H1 (cell line): ENCODE measurements at regions of chr6 and their contacts with region 1.

Region 1: GRCh38 chr6:108541838-108542759 is 18.6 kb upstream of the FOXO3 start:
- DNase-seq: peak; percentile 59 to 72
- H3K4me3 ChIP-seq: peak overlapping the region in 1 of 4 experiments; percentile 26; a peak in 1 of 8 replicates
- H3K27ac ChIP-seq: no peak overlapping the region
- H3K4me1 ChIP-seq: peaks cover 0 to 9% (median 1%) of the 10 kb centered on the region in 4 experiments; a peak in 3 of 7 replicates
- H3K27me3 ChIP-seq: no peaks in the 10 kb centered on the region
- CTCF ChIP-seq: peak; percentile 45 to 91 (median 90)
- EP300 ChIP-seq: no peak
- POLR2A ChIP-seq: no peak
- RAD21 ChIP-seq: peak; percentile 99

Region 2: GRCh38 chr6:108464418-108465093 is 77.5 kb before region 1 on chr6:
- CTCF ChIA-PET with region 1: no interaction called
- POLR2A ChIA-PET with region 1: no interaction called
- DNase-seq: no peak
- H3K4me3 ChIP-seq: no peak overlapping the region
- H3K27ac ChIP-seq: no peak overlapping the region
- H3K4me1 ChIP-seq: 0 out of 7 replicates have a peak, but pooled peaks cover 0 to 3% (median 0%) of the 10 kb centered on the region in 4 experiments
- H3K27me3 ChIP-seq: no peaks in the 10 kb centered on the region
- CTCF ChIP-seq: no peak
- EP300 ChIP-seq: no peak
- POLR2A ChIP-seq: no peak
- RAD21 ChIP-seq: no peak

Region 3: DNA sequence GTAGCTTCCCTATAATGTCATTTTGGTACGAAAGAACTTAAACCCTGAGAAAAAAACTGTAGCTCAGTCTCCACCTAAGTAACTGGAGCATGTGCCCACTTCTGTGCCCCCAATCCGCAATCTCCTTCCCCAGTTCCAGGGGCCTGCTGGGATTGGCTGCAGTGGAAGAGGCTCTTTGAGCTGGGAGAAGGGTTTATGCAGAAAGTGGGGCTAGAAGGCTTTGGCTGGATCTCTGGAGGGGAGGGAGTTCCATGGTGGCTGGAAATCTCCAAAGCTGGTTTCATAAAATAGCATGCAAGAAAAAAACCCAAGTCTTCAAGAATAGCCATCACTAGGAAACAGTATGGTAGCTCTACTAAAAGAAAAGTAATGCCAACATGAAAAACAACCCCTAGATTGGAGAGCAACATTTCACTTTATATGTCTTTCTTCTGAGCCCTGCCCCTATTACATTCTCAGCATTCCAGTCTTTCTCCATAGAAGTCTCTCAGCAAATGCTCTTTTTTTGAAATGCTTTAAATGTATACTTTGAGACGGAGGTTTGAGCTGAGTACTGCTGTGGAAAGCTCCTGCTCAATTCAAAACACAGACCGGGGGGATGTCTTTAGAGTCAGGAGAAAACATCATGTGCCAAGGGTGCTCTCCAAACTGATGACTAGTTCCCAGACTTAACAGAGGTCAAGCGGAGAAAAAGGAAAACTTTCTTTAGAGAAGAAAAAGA is 17.4 kb before region 1 on chr6:
- CTCF ChIA-PET with region 1: interaction called, 12 read pairs
- POLR2A ChIA-PET with region 1: interaction called, 3 read pairs
- DNase-seq: no peak
- H3K4me3 ChIP-seq: no peak overlapping the region; a peak in 1 of 8 replicates
- H3K27ac ChIP-seq: no peak overlapping the region
- H3K4me1 ChIP-seq: 0 out of 7 replicates have a peak, but pooled peaks cover 0 to 2% (median 0%) of the 10 kb centered on the region in 4 experiments
- H3K27me3 ChIP-seq: no peaks in the 10 kb centered on the region
- CTCF ChIP-seq: no peak
- EP300 ChIP-seq: no peak
- POLR2A ChIP-seq: no peak
- RAD21 ChIP-seq: no peak

Region 4: DNA sequence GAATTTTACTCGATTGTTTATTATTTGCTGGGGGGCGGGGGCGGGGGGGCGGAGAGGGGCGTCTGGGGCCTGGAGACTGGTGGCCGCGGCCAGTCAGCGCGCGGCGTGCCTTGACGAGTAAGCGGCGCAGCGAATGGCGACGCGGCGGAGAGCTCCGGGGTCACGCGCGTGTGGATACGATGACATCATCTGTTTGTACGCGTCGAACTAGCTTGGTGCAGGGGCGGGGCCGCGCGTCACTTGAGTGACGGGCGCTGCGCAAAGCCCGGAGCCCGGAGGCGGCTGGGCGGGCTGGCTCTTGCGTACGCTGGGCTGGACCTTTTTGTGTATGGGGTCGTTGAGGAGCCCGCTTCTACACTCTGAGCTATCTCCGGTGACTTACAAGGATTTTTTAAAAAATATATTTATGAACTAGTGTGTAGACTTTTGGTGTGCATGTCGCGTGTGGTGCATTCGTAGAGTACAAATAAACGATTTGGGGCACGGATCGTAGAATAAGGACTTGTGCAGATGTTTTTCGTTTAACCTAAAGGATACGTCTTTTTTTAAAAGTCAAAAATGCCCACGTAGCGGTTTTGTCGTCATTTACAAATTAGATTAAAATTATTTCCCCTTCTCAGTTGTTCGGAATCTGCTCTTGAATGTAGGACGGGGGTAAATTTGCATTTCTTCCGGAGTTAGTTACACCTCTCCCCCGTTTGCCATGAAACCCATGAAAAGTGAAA is 16.4 kb after region 1 on chr6:
- CTCF ChIA-PET with region 1: interaction called, 27 read pairs
- POLR2A ChIA-PET with region 1: interaction called, 6 read pairs
- DNase-seq: peak; percentile 93 to 94
- H3K4me3 ChIP-seq: peak overlapping the region; percentile 86 to 99 (median 92)
- H3K27ac ChIP-seq: peak overlapping the region; percentile 91; the same call in 1 of the 2 replicates
- H3K4me1 ChIP-seq: peaks cover 5 to 10% (median 7%) of the 10 kb centered on the region in 4 experiments
- H3K27me3 ChIP-seq: peaks cover 0 to 23% (median 11%) of the 10 kb centered on the region in 4 experiments; a peak in 6 of 7 replicates
- CTCF ChIP-seq: no peak
- EP300 ChIP-seq: peak in 1 of 2 experiments; percentile 57; a peak in 1 of 3 replicates
- POLR2A ChIP-seq: peak; percentile 0 to 9; a peak in 1 of 3 replicates
- RAD21 ChIP-seq: 0 out of 4 replicates have a peak, but pooled peaks of 1 of the 2 experiments have one; percentile 13

Region 5: DNA sequence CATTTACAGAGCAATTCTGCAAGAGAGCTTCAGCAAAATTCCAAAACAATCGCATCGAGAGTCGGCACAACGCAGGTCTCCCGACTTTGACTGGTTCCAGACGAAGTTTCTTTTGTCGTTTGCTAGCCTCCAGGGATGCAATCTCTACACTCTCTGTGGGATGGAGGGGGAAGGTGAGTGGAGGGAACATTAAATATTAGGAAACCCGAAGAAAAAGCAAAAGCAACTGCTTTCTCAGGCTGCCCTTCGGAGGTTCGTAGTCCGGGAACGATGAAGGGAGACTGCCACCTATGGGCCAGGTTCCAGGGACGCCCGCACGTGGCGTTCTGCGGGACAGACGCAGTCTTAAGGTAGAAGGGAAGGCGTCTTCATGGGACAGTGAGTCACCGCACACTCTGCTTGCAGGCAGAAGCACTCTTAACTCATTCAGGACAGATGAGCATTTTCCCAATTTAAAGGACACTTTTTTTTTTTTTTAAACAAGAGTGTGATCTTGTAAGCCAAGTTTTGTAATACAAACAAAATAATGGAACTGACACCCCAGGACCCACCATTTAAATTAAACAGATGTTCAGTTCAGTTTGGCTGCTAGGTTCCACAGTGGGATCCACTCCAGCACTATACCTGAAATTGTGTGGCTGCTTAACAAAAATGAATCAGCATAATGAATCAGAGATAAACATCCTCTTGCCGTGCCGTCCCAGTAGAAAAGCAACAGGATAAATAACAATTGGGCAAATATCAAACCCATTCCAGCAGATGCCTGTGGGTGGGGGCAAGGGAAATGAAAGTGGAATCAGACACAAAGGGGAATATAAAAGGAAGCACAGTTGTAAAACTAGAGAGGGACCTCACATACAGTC is 240.3 kb after region 1 on chr6:
- CTCF ChIA-PET with region 1: interaction called, 28 read pairs
- POLR2A ChIA-PET with region 1: no interaction called
- DNase-seq: peak; percentile 73 to 82
- H3K4me3 ChIP-seq: peak overlapping the region; percentile 28 to 63 (median 52); a peak in 7 of 8 replicates
- H3K27ac ChIP-seq: no peak overlapping the region
- H3K4me1 ChIP-seq: peaks cover 0 to 14% (median 13%) of the 10 kb centered on the region in 4 experiments; a peak in 6 of 7 replicates
- H3K27me3 ChIP-seq: peaks cover 0 to 5% (median 3%) of the 10 kb centered on the region in 4 experiments; a peak in 3 of 7 replicates
- CTCF ChIP-seq: peak; percentile 89 to 96 (median 91)
- EP300 ChIP-seq: no peak
- POLR2A ChIP-seq: no peak
- RAD21 ChIP-seq: peak; percentile 92 to 95

Region 6: GRCh38 chr6:108835218-108835850 is 293.2 kb after region 1 on chr6:
- CTCF ChIA-PET with region 1: interaction called, 117 read pairs
- POLR2A ChIA-PET with region 1: interaction called, 3 read pairs
- DNase-seq: peak in 1 of 2 experiments; percentile 91
- H3K4me3 ChIP-seq: no peak overlapping the region
- H3K27ac ChIP-seq: no peak overlapping the region
- H3K4me1 ChIP-seq: peaks cover 3 to 8% (median 6%) of the 10 kb centered on the region in 4 experiments; a peak in 6 of 7 replicates
- H3K27me3 ChIP-seq: no peaks in the 10 kb centered on the region
- CTCF ChIP-seq: peak; percentile 93 to 99 (median 98)
- EP300 ChIP-seq: no peak
- POLR2A ChIP-seq: no peak
- RAD21 ChIP-seq: peak; percentile 87 to 92

Region 7: GRCh38 chr6:108896111-108896661 is 354.1 kb after region 1 on chr6:
- CTCF ChIA-PET with region 1: interaction called, 58 read pairs
- POLR2A ChIA-PET with region 1: no interaction called
- DNase-seq: no peak
- H3K4me3 ChIP-seq: no peak overlapping the region
- H3K27ac ChIP-seq: no peak overlapping the region
- H3K4me1 ChIP-seq: no peaks in the 10 kb centered on the region
- H3K27me3 ChIP-seq: no peaks in the 10 kb centered on the region
- CTCF ChIP-seq: no peak
- EP300 ChIP-seq: no peak
- POLR2A ChIP-seq: no peak
- RAD21 ChIP-seq: no peak

Region 8: DNA sequence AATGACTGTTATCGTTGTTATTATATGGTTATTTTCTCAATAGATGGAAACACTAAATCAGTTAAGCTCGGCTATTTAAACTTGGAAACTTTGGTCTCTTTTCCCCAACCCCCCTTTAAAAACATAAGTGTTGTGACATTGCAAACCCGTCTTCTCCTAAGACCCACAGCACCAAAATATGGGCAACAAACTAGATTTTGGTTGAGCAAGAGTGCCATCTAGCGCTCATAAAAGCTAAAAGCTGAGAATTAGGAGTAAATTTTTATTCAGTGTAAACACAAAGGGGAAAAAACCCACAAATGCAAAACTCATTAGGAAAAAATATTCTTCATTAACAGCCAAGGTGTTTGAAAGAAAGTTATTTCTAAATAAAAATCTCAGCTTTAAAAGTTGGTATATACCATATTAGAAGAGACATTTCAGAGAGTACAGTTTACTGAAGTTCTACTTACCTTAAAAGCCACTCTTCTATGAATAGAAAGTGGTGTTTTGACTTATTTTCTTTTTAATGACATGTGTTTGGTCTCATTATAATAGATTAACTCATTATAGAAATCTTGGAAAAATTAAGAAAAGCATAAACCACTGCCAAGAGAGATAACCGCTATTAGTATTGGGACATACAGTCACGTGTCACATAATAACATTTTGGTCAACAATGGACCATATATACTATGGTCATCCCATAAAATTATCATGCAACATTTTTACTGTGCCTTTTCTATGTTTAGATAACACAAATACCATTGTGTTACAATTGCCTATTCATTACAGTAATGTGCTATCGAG is 531.4 kb after region 1 on chr6:
- CTCF ChIA-PET with region 1: interaction called, 64 read pairs
- POLR2A ChIA-PET with region 1: no interaction called
- DNase-seq: no peak
- H3K4me3 ChIP-seq: no peak overlapping the region
- H3K27ac ChIP-seq: no peak overlapping the region
- H3K4me1 ChIP-seq: no peaks in the 10 kb centered on the region
- H3K27me3 ChIP-seq: no peaks in the 10 kb centered on the region
- CTCF ChIP-seq: peak in 2 of 3 experiments; percentile 56 to 70; a peak in 3 of 4 replicates
- EP300 ChIP-seq: no peak
- POLR2A ChIP-seq: no peak
- RAD21 ChIP-seq: peak; percentile 88 to 92